ENCODE measurements at regions of chr12 and their contacts with region 1.

Region 1: GRCh38 chr12:53074283-53074998 is 4.7 kb downstream of the SPRYD3 start:
- DNase-seq: no peak
- ATAC-seq: no peak
- H3K4me3 ChIP-seq: no peak overlapping the region
- H3K4me3 Mint-ChIP-seq: no peak overlapping the region
- H3K27ac ChIP-seq: no peak overlapping the region
- H3K27ac Mint-ChIP-seq: no peak overlapping the region
- H3K4me1 ChIP-seq: peaks cover 3 to 26% of the 10 kb centered on the region in 2 experiments
- H3K4me1 Mint-ChIP-seq: peaks cover 54 to 56% (median 56%) of the 10 kb centered on the region in 3 donors
- H3K27me3 ChIP-seq: no peaks in the 10 kb centered on the region
- H3K27me3 Mint-ChIP-seq: no peaks in the 10 kb centered on the region

Region 2: GRCh38 chr12:52826611-52827498 is 247.6 kb before region 1 on chr12:
- CTCF ChIA-PET with region 1: no interaction called
- POLR2A ChIA-PET with region 1: no interaction called
- DNase-seq: no peak
- ATAC-seq: no peak
- H3K4me3 ChIP-seq: no peak overlapping the region
- H3K4me3 Mint-ChIP-seq: no peak overlapping the region
- H3K27ac ChIP-seq: no peak overlapping the region
- H3K27ac Mint-ChIP-seq: no peak overlapping the region
- H3K4me1 ChIP-seq: peaks cover 0 to 2% of the 10 kb centered on the region in 2 experiments
- H3K4me1 Mint-ChIP-seq: peaks cover 9 to 12% (median 10%) of the 10 kb centered on the region in 3 donors
- H3K27me3 ChIP-seq: peaks cover 0 to 12% of the 10 kb centered on the region in 2 experiments
- H3K27me3 Mint-ChIP-seq: peaks cover 0 to 2% of the 10 kb centered on the region in 2 donors

Region 3: GRCh38 chr12:53014709-53015108 is 59.7 kb before region 1 on chr12:
- CTCF ChIA-PET with region 1: no interaction called
- POLR2A ChIA-PET with region 1: no interaction called
- DNase-seq: no peak
- ATAC-seq: no peak
- H3K4me3 ChIP-seq: no peak overlapping the region
- H3K4me3 Mint-ChIP-seq: no peak overlapping the region
- H3K27ac ChIP-seq: no peak overlapping the region
- H3K27ac Mint-ChIP-seq: peak overlapping the region in 1 of 2 donors; percentile 28
- H3K4me1 ChIP-seq: peaks cover 6 to 24% of the 10 kb centered on the region in 2 experiments
- H3K4me1 Mint-ChIP-seq: peaks cover 43 to 52% (median 50%) of the 10 kb centered on the region in 3 donors
- H3K27me3 ChIP-seq: no peaks in the 10 kb centered on the region
- H3K27me3 Mint-ChIP-seq: no peaks in the 10 kb centered on the region

Region 4: GRCh38 chr12:53115112-53115890 is 40.9 kb after region 1 on chr12:
- CTCF ChIA-PET with region 1: no interaction called
- POLR2A ChIA-PET with region 1: no interaction called
- DNase-seq: no peak
- ATAC-seq: no peak
- H3K4me3 ChIP-seq: no peak overlapping the region
- H3K4me3 Mint-ChIP-seq: no peak overlapping the region
- H3K27ac ChIP-seq: no peak overlapping the region
- H3K27ac Mint-ChIP-seq: no peak overlapping the region
- H3K4me1 ChIP-seq: no peaks in the 10 kb centered on the region
- H3K4me1 Mint-ChIP-seq: no peaks in the 10 kb centered on the region
- H3K27me3 ChIP-seq: no peaks in the 10 kb centered on the region
- H3K27me3 Mint-ChIP-seq: no peaks in the 10 kb centered on the region

Region 5: GRCh38 chr12:53145383-53146260 is 71.2 kb after region 1 on chr12:
- CTCF ChIA-PET with region 1: interaction called in 1 of 2 experiments, 12 read pairs
- POLR2A ChIA-PET with region 1: no interaction called
- DNase-seq: no peak
- ATAC-seq: no peak
- H3K4me3 ChIP-seq: no peak overlapping the region
- H3K4me3 Mint-ChIP-seq: no peak overlapping the region
- H3K27ac ChIP-seq: no peak overlapping the region
- H3K27ac Mint-ChIP-seq: no peak overlapping the region
- H3K4me1 ChIP-seq: no peaks in the 10 kb centered on the region
- H3K4me1 Mint-ChIP-seq: no peaks in the 10 kb centered on the region
- H3K27me3 ChIP-seq: peaks cover 0 to 2% of the 10 kb centered on the region in 2 experiments
- H3K27me3 Mint-ChIP-seq: no peaks in the 10 kb centered on the region

Region 6: DNA sequence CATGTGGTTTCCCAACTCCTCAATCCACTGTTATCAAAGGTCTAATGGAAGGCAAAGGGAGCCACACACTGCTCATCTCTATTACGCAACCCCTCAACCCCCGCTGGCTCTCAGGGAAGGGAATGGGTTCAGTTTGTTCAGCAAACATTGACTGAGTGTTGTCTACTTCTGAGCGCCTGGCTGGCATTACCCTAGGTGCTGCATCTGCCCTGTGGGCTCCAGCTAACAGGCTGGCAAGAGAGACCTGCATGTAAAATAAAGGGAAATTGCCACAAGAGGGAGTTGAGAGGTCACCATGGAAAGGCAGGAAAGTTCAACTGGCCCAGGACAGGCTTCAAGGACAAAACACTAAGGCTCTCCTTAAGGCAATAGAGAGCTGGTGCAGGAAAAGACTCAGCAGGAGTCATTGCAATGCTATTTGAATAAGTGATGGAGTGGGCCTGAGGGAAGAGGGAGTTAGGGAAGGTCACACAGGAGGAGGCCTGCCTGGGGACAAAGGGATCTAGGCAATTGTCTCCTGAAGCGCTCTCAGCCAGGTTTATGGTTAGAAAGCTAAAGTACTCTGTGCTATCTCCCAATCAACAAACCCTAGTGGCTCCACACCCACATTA is 100.5 kb after region 1 on chr12:
- CTCF ChIA-PET with region 1: no interaction called
- POLR2A ChIA-PET with region 1: no interaction called
- DNase-seq: no peak
- ATAC-seq: peak in 1 of 4 experiments; percentile 30
- H3K4me3 ChIP-seq: no peak overlapping the region
- H3K4me3 Mint-ChIP-seq: no peak overlapping the region
- H3K27ac ChIP-seq: no peak overlapping the region
- H3K27ac Mint-ChIP-seq: no peak overlapping the region
- H3K4me1 ChIP-seq: peaks cover 8 to 9% of the 10 kb centered on the region in 2 experiments
- H3K4me1 Mint-ChIP-seq: peaks cover 11 to 12% (median 11%) of the 10 kb centered on the region in 3 donors
- H3K27me3 ChIP-seq: no peaks in the 10 kb centered on the region
- H3K27me3 Mint-ChIP-seq: no peaks in the 10 kb centered on the region